ENCODE measurements at regions of chr1 and their contacts with region 1.

Region 1: DNA sequence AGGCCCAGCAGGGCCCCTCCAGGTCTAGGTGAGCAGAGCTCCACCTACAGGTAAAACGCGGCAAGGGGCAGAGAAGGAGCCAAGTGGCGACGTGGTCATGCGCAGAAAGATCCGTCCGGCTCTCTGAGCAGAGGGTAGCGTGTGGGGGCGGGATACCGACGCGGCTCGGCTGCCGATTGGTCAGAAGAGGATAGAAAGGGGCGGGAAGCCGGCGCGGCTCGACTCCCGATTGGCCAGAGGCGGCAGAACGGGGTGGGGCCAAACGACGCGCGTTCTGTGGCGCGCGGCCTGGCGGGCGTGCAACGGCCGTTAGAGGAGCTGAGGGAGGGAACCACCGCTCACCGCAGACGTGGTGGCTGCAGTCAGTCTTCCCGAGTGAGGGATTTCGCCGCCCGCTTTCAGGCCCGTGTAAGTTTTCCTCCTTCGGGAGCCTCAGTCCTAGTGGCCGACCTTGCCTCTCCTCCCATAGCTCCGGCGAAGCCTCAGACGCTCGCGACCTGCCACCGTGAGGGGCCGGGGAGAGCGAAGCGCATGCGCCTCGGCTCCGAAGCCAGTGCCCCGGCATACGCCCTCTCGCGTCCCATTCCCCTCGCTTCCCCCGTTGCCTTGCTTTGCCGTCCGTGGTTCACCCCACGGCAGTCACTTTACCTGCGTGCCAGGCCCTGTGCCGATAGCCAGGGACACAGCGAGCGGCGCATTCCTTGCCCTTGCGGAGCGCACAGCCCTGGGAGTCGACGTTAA is at the start of gene CEP85:
- DNase-seq: peak; percentile 75
- H3K4me3 ChIP-seq: peak within 1 kb of the TSS; percentile 100
- CTCF ChIP-seq: peak; percentile 90

Region 2: GRCh38 chr1:26210147-26210870 is 23.8 kb before region 1 on chr1:
- CTCF ChIA-PET with region 1: interaction called, 26 read pairs
- POLR2A ChIA-PET with region 1: no interaction called
- DNase-seq: no peak
- H3K4me3 ChIP-seq: no peak overlapping the region
- CTCF ChIP-seq: no peak

Region 3: GRCh38 chr1:26254404-26254803 is 20.3 kb after region 1 on chr1:
- CTCF ChIA-PET with region 1: interaction called, 15 read pairs
- POLR2A ChIA-PET with region 1: no interaction called
- DNase-seq: no peak
- H3K4me3 ChIP-seq: no peak overlapping the region
- CTCF ChIP-seq: no peak

Region 4: DNA sequence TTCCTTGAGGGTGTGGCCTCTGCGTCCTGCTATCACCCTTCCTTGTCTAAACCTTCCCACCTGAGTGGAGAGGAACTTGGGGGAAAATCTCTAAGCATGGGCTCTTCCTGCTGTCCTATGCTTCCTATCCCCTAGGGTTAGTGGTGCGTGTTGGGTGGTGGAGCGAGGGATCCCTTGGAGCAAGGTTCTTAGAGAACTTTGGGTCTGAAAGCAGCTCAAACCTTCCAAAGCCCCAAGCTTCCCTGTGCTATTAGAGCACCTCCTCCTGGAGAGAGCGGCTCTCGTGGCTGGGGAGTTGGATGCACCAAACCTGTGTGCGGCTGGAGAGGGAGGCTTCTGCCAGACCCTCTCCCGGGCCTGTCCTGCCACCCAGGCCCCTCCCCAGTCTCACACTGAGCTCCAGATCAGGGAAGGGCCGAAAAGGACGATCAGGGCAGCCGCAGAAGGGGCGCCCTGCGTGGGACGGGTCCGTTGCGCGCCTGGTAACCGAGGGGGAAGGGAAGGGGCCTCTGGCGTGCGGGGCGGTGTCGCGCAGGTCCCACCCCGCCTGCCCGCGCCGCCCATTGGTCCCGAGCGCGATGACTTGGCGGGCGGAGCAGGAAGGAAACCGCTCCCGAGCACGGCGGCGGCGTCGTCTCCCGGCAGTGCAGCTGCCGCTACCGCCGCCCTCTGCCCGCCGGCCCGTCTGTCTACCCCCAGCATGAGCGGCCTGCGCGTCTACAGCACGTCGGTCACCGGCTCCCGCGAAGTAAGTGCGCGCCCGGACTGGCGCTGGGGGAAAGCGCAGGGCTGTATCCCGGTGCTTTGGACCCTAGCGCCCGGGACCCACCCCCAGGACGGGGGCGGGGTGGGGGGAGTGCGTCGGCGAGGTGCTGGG is 45.6 kb after region 1 on chr1 and contains the start of gene SH3BGRL3:
- CTCF ChIA-PET with region 1: interaction called, 16 read pairs
- POLR2A ChIA-PET with region 1: interaction called, 4 read pairs
- DNase-seq: no peak
- H3K4me3 ChIP-seq: peak within 1 kb of the TSS; percentile 81
- CTCF ChIP-seq: peak; percentile 75

Measured in AG04449 (cell line).